ENCODE measurements at regions of chr2 and their contacts with region 1.

Region 1: DNA sequence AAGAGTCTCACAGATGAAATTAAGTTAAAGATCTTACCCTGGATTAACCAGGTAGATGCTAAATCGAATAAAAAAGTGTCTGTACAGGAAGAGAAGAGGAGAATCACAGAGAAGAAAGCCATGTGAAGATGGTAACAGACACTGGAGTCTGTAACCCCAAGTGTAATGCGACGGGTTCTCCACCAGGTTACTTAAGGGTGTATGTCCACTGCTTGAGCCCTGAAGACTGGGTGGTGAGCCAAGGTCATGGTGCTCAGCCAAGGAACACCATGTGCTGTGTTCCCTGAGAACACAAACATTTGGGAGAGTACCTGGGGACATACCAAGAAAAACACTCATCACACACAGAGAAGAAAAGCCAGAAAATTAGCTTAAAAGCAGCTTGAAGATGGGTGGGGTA is 8.2 kb upstream of the ACADL start:
- DNase-seq: no peak
- H3K4me3 ChIP-seq: no peak overlapping the region
- H3K27ac ChIP-seq: no peak overlapping the region
- H3K4me1 ChIP-seq: no peaks in the 10 kb centered on the region
- H3K27me3 ChIP-seq: no peaks in the 10 kb centered on the region
- CTCF ChIP-seq: no peak
- POLR2A ChIP-seq: no peak

Region 2: GRCh38 chr2:210389856-210390255 is 156.4 kb after region 1 on chr2:
- intact Hi-C with region 1: loop called (anchors 5 kb)
- DNase-seq: no peak
- H3K4me3 ChIP-seq: no peak overlapping the region
- H3K27ac ChIP-seq: no peak overlapping the region
- H3K4me1 ChIP-seq: no peaks in the 10 kb centered on the region
- H3K27me3 ChIP-seq: no peaks in the 10 kb centered on the region
- CTCF ChIP-seq: no peak
- POLR2A ChIP-seq: no peak

Region 3: GRCh38 chr2:210476194-210477128 is 243.0 kb after region 1 on chr2 and contains the start of gene LANCL1:
- intact Hi-C with region 1: no loop called
- DNase-seq: peak; percentile 88 to 93
- H3K4me3 ChIP-seq: peak within 1 kb of the TSS; percentile 81 to 88
- H3K27ac ChIP-seq: peak within 1 kb of the TSS; percentile 78 to 88
- H3K4me1 ChIP-seq: no peaks in the 10 kb centered on the region
- H3K27me3 ChIP-seq: no peaks in the 10 kb centered on the region
- CTCF ChIP-seq: no peak
- POLR2A ChIP-seq: peak; percentile 72 to 77
- total RNA-seq, gene LANCL1: 41.6 to 78.8 (median 42.0) TPM